ENCODE measurements at regions of chr5 and their contacts with region 1.

Region 1: DNA sequence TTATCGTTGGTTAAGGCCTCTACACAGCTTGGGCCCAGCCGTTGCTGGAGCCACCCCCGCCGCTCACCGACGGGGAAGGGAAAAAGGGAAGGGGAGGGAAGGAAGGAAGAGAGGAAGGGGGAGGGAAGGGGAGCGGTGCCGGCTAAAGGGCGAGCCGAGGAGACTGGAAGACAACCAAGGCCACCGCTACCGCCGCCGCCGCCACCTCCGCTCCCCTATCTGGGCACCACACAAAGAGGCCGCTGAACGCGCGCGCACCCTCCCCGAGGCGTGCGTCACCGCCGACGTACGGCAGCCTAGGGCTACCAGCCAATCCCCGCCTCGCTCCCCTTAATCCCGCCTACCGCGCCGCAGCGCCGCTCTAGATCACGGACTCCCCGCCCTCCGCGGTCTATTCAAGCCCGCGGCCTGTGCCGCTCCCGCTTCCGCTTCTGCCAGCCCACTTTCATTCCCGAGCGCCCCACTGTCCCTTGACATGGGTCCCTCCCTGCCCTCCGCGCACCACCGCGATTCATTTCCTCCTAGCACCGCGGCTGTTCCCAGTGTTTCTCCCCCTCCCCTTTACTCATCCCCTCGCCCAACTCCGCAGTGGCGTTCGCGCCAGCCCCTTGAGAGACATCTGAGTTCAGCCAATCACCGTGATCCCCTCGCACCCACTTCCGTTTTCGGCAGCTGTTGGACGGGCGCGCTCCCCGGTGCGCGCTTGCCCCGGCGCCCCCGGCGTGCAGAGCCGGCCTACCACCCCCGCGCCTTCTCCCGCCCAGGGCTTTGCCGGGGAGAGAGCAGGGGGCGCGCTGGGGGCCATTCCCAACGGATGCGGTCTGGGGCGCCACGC is at the start of gene HNRNPA0:
- DNase-seq: peak; percentile 99
- ATAC-seq: peak; percentile 82
- H3K4me3 ChIP-seq: peak within 1 kb of the TSS; percentile 69 to 95 (median 87)
- H3K4me3 Mint-ChIP-seq: peak within 1 kb of the TSS; percentile 97
- H3K27ac ChIP-seq: peak within 1 kb of the TSS; percentile 98 to 100
- H3K27ac Mint-ChIP-seq: peak within 1 kb of the TSS; percentile 100
- H3K4me1 ChIP-seq: peaks cover 27 to 28% of the 10 kb centered on the region in 2 donors
- H3K4me1 Mint-ChIP-seq: peaks cover 32% of the 10 kb centered on the region
- H3K27me3 ChIP-seq: no peaks in the 10 kb centered on the region
- H3K27me3 Mint-ChIP-seq: no peaks in the 10 kb centered on the region
- CTCF ChIP-seq: no peak
- total RNA-seq, gene HNRNPA0: 29.6 and 31.5 TPM in 2 replicates

Region 2: DNA sequence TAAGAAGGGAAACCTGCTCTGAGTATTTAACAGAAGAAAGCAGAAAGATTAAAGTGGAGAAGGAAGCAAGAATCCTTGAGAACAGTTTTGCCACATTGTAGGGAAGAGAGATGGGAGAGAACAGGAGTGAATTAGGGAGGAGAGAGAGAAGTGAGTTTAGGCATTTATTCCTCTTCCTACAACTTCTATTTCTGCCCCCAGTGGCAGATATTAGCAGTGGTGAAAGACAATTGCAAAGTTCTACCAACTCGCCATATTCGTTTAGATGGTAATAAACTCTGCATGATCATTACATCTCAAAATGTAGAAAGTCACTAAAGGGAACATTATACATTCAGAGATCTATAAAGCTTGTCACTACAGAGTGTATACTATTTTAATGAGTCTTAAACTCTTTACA is 948.9 kb before region 1 on chr5:
- CTCF ChIA-PET with region 1: no interaction called
- POLR2A ChIA-PET with region 1: no interaction called
- intact Hi-C with region 1: no loop called
- DNase-seq: no peak
- ATAC-seq: no peak
- H3K4me3 ChIP-seq: no peak overlapping the region
- H3K4me3 Mint-ChIP-seq: no peak overlapping the region
- H3K27ac ChIP-seq: no peak overlapping the region
- H3K27ac Mint-ChIP-seq: no peak overlapping the region
- H3K4me1 ChIP-seq: no peaks in the 10 kb centered on the region
- H3K4me1 Mint-ChIP-seq: no peaks in the 10 kb centered on the region
- H3K27me3 ChIP-seq: no peaks in the 10 kb centered on the region
- H3K27me3 Mint-ChIP-seq: no peaks in the 10 kb centered on the region
- CTCF ChIP-seq: no peak

Region 3: DNA sequence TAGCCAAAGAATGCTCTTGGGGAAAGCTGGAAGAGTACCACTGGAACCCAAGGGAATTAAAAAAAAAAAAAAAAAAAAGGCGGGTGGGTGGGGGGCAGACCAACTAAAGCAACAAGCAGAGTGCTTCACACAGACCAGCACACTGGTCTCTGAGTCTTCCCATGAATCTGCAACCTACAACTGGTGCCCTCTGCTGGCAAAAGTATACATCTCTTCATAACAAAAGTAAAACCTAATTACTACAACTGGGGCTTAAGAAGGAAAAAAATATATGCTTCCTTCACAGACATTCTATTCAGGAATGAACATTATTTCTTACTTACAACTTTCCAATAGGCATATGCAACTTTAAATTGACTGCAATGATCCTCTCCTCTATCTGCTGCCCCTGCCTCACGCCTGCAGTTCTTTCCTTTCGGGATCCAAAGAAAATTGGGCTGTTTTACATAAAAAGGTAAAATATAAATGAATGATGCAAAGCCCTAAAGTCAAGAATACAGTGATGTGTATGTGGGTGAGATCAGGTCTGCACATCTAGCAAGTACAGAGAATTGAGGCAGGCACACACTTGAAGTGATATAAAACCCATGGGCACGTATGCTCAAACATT is 11.2 kb before region 1 on chr5:
- CTCF ChIA-PET with region 1: interaction called, 29 read pairs
- POLR2A ChIA-PET with region 1: interaction called, 3 read pairs
- intact Hi-C with region 1: loop called (anchors 1 kb)
- DNase-seq: peak; percentile 73
- ATAC-seq: peak; percentile 71
- H3K4me3 ChIP-seq: no peak overlapping the region
- H3K4me3 Mint-ChIP-seq: no peak overlapping the region
- H3K27ac ChIP-seq: no peak overlapping the region
- H3K27ac Mint-ChIP-seq: no peak overlapping the region
- H3K4me1 ChIP-seq: no peaks in the 10 kb centered on the region
- H3K4me1 Mint-ChIP-seq: peaks cover 2% of the 10 kb centered on the region
- H3K27me3 ChIP-seq: no peaks in the 10 kb centered on the region
- H3K27me3 Mint-ChIP-seq: no peaks in the 10 kb centered on the region
- CTCF ChIP-seq: peak; percentile 81

Region 4: GRCh38 chr5:138213161-138214029 is 459.1 kb after region 1 on chr5 and contains the start of gene CDC23:
- CTCF ChIA-PET with region 1: no interaction called
- POLR2A ChIA-PET with region 1: no interaction called
- intact Hi-C with region 1: loop called (anchors 1 kb)
- DNase-seq: peak; percentile 95
- ATAC-seq: peak; percentile 97
- H3K4me3 ChIP-seq: peak within 1 kb of the TSS; percentile 77 to 99 (median 93)
- H3K4me3 Mint-ChIP-seq: peak within 1 kb of the TSS; percentile 93
- H3K27ac ChIP-seq: peak within 1 kb of the TSS; percentile 52 to 87
- H3K27ac Mint-ChIP-seq: peak within 1 kb of the TSS; percentile 92
- H3K4me1 ChIP-seq: peaks cover 10 to 20% of the 10 kb centered on the region in 2 donors
- H3K4me1 Mint-ChIP-seq: peaks cover 19% of the 10 kb centered on the region
- H3K27me3 ChIP-seq: no peaks in the 10 kb centered on the region
- H3K27me3 Mint-ChIP-seq: no peaks in the 10 kb centered on the region
- CTCF ChIP-seq: no peak
- total RNA-seq, gene CDC23: 29.7 and 35.4 TPM in 2 replicates

Region 5: DNA sequence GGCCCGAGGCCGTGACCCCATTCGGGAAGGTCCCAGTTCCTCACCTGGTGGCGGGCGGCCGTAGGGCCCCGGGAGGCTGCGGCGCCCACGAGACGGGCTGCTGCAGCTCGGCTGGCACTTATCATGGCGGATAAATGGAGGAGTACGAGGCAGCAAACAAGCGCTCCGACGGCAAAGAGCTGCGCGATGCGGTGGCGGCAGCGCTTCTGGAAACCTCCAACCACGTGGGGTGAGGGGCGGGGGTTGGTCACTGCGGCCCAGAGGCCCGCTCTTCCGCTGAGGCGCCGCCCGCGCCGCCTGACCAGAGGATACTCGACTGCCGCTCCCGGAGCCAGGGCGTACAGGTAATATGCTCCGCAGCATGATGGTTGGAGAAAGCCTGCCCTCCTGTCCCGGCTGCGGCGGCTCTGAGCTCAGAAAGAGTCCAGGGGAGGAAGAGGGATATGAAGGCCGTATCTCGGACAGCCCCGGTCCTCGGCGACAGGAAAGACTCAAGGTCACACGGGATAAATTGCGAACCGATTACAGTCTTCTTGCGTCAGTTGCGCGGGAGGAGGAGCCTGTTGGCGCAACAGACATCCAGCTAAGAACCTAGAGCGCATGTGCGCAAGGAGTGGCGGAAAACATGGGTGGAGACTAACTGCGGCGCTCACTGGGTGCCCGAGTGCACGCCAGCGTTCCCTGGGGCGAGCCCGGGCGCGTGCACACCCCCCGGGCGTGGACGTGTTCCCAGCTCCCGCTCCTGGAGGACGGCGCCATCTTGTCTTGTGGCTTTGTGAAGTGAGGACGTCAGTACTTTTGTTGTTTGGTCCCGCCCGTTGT is 821.1 kb after region 1 on chr5 and contains the start of gene HSPA9:
- CTCF ChIA-PET with region 1: no interaction called
- POLR2A ChIA-PET with region 1: no interaction called
- intact Hi-C with region 1: loop called (anchors 10 kb)
- DNase-seq: peak; percentile 100
- ATAC-seq: peak; percentile 85
- H3K4me3 ChIP-seq: peak within 1 kb of the TSS; percentile 80 to 98 (median 96)
- H3K4me3 Mint-ChIP-seq: peak within 1 kb of the TSS; percentile 96
- H3K27ac ChIP-seq: peak within 1 kb of the TSS; percentile 99 to 100
- H3K27ac Mint-ChIP-seq: peak within 1 kb of the TSS; percentile 100
- H3K4me1 ChIP-seq: peaks cover 16% of the 10 kb centered on the region in 2 donors
- H3K4me1 Mint-ChIP-seq: peaks cover 30% of the 10 kb centered on the region
- H3K27me3 ChIP-seq: no peaks in the 10 kb centered on the region
- H3K27me3 Mint-ChIP-seq: no peaks in the 10 kb centered on the region
- CTCF ChIP-seq: no peak
- total RNA-seq, gene HSPA9: 139 and 142 TPM in 2 replicates

Region 6: DNA sequence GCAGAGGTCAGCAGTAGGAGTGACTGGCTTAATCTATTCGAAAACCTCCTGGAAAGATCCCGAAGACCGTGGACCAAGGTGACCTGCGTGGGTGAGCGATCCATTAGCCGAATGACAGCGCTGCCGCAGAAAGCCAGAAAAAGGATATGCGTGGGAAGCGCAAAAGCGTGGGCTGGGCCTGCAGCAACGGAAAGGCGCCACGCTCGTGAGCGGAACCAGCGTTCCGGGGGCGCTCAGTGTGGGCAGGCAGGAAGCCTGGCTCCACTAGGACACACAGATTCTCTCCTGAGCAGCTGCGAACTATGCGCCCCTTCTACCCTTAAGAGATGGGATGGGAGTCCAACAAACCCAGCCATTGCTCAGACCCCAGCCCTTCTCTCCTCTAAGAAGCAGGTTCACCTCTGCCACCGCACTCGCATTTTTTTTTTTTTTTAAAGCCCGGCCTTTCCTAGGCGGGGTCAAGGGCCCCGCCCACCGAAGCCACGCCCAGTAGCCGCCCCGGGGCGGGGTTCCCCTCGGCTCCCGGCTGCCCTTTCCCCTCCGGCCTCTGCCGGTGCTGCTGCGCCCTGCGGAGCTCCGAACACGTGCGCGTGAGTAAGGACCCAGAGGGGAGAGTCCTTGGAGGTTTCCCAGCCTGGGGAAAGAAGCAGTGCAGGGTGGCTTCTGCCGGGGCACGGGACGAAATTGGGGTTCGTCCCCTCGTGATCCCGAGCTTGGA is 1519.4 kb after region 1 on chr5:
- CTCF ChIA-PET with region 1: no interaction called
- POLR2A ChIA-PET with region 1: no interaction called
- intact Hi-C with region 1: loop called (anchors 5 kb)
- DNase-seq: peak; percentile 95
- ATAC-seq: peak; percentile 98
- H3K4me3 ChIP-seq: peak overlapping the region; percentile 61 to 86 (median 75)
- H3K4me3 Mint-ChIP-seq: peak overlapping the region; percentile 92
- H3K27ac ChIP-seq: peak overlapping the region; percentile 62 to 74
- H3K27ac Mint-ChIP-seq: peak overlapping the region; percentile 91
- H3K4me1 ChIP-seq: peaks cover 32 to 44% of the 10 kb centered on the region in 2 donors
- H3K4me1 Mint-ChIP-seq: peaks cover 46% of the 10 kb centered on the region
- H3K27me3 ChIP-seq: no peaks in the 10 kb centered on the region
- H3K27me3 Mint-ChIP-seq: no peaks in the 10 kb centered on the region
- CTCF ChIP-seq: no peak